ENCODE measurements at regions of chr10 and their contacts with region 1.

Region 1: DNA sequence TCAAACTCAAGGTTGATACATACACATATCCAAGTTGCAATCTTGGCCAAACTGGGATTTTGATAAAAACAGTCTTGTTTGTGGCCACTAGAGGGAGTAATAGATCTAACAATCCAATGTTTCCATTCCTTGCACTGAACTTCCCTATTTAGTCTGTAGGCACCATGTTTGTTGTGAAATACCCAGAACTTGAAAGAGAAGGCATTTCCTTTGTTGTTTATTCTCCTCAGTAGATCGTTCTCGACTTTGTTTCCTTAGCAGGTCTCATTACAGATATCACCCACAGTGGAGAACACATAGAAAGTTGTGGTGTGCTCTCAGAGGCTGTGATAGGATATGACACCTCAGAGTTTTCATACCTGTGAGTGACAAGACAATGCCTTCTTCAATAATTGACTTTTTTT is 70.3 kb upstream of the MXI1 start:
- DNase-seq: no peak
- H3K4me3 ChIP-seq: peak overlapping the region in 3 of 59 donors; percentile 0 to 17 (median 15)
- H3K27ac ChIP-seq: peak overlapping the region in 57 of 59 donors; percentile 4 to 88 (median 66)
- H3K27me3 ChIP-seq: no peaks in the 10 kb centered on the region
- CTCF ChIP-seq: peak; percentile 83 to 97 (median 90)

Region 2: DNA sequence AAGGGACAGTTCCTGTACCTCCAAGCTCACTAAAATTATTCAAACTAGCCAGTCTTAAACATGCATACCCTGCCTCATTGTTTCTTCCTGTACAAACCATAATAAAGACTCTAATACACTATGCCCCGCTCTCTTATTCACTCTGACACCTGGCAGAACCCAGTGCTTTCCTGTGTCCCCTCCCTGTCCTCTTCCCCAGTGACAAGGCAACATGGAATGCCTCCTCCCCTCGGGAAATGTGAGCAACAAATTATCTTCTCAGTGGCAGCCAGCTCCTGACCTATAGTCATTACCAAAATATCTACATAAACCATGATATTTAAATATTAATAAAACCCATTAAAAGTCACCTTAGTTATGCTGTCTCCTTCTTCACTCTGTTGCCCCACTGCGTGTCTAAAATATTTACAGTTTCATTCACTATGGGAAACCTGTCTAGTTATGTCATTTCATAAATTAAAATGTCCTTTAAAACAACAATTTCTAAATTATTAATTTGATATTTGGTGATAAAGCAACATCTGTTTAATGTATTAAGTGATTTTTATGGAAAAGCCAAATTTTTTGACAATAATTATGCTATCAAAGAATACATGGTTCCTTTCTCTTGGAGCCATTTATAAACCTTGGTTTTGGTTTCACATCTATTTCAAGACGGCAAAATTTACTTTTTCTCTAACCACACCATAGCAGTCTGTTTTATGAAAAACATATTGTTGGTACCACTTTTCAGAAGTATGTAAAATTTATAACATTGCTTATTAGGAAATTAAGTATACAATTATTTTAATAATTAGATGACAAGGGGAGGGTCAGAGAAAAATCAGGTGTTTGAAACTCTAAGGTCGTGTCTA is 1569.0 kb before region 1 on chr10:
- intact Hi-C with region 1: no loop called
- DNase-seq: no peak
- H3K4me3 ChIP-seq: no peak overlapping the region
- H3K27ac ChIP-seq: no peak overlapping the region
- H3K27me3 ChIP-seq: peaks cover 0 to 2% (median 0%) of the 10 kb centered on the region in 45 donors
- CTCF ChIP-seq: no peak

Region 3: GRCh38 chr10:110007701-110008517 is 129.2 kb before region 1 on chr10 and contains the start of gene ADD3:
- intact Hi-C with region 1: loop called (anchors 1 to 5 kb)
- DNase-seq: peak; percentile 90 to 98 (median 94)
- H3K4me3 ChIP-seq: peak within 1 kb of the TSS; percentile 73 to 99 (median 94)
- H3K27ac ChIP-seq: peak within 1 kb of the TSS; percentile 84 to 99 (median 97)
- H3K27me3 ChIP-seq: no peaks in the 10 kb centered on the region
- CTCF ChIP-seq: peak in 8 of 56 donors; percentile 3 to 23 (median 12)
- total RNA-seq, gene ADD3: 171 to 457 (median 267) TPM

Region 4: GRCh38 chr10:110088367-110089104 is 48.6 kb before region 1 on chr10:
- intact Hi-C with region 1: loop called (anchors 5 to 10 kb)
- DNase-seq: no peak
- H3K4me3 ChIP-seq: peak overlapping the region in 1 of 59 donors; percentile 7
- H3K27ac ChIP-seq: peak overlapping the region in 56 of 59 donors; percentile 4 to 96 (median 78)
- H3K27me3 ChIP-seq: no peaks in the 10 kb centered on the region
- CTCF ChIP-seq: no peak

Region 5: GRCh38 chr10:110210674-110211464 is 73.7 kb after region 1 on chr10:
- intact Hi-C with region 1: loop called (anchors 5 kb)
- DNase-seq: peak; percentile 97 to 100 (median 99)
- H3K4me3 ChIP-seq: peak overlapping the region; percentile 57 to 96 (median 86)
- H3K27ac ChIP-seq: peak overlapping the region; percentile 88 to 100 (median 100)
- H3K27me3 ChIP-seq: no peaks in the 10 kb centered on the region
- CTCF ChIP-seq: peak in 12 of 56 donors; percentile 0 to 35 (median 16)

Region 6: GRCh38 chr10:110279407-110279986 is 142.4 kb after region 1 on chr10:
- intact Hi-C with region 1: loop called (anchors 2 to 5 kb)
- DNase-seq: peak in 5 of 10 donors; percentile 50 to 79 (median 60)
- H3K4me3 ChIP-seq: peak overlapping the region in 45 of 59 donors; percentile 1 to 53 (median 21)
- H3K27ac ChIP-seq: peak overlapping the region; percentile 12 to 99 (median 96)
- H3K27me3 ChIP-seq: no peaks in the 10 kb centered on the region
- CTCF ChIP-seq: peak; percentile 70 to 98 (median 89)

Region 7: DNA sequence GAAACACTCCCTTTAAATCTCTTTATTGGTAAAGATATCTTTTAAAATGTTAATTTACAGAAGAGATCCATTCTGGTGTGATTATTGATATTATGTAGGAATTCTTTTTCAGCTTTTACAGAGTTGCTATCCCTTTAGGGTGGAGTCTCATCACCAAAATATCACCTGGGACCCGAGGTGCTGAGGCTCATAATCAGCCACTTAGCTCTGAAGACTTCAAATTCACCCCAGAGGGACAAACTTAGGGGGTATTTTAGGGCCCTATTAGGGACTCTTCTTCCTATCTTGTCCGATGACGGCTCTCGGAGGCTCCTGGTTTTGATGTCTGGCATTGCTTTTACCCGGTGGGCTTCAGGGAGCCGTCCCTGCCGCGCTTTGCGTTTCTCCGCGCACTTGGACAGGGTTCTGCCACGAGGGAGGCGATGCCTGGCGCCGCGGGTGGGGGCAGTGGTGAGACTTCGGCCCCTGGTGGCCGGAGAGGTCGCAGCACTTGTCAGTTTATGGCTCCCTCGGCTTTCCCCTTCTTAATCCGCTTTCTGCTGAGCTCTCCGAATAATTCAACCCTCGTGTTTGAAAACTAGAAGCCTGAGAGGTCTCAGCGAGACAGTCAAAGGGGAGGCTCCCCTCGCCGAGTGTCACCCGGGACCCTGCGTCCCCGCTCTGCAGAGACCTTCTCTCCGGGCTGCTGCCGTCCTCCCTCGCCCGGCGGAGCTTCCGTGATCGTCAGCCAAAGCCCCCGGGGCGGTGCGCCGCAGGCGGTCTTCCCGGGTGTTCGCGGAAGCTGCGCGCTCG is 534.8 kb after region 1 on chr10:
- intact Hi-C with region 1: loop called in 1 of 2 experiments (anchors 5 kb)
- DNase-seq: peak; percentile 35 to 72 (median 57)
- H3K4me3 ChIP-seq: peak overlapping the region; percentile 42 to 82 (median 68)
- H3K27ac ChIP-seq: peak overlapping the region in 25 of 59 donors; percentile 8 to 79 (median 57)
- H3K27me3 ChIP-seq: peaks cover 0 to 28% (median 0%) of the 10 kb centered on the region in 45 donors
- CTCF ChIP-seq: peak in 55 of 56 donors; percentile 43 to 89 (median 71)